ENCODE measurements at regions of chr3 and their contacts with region 1.

Region 1: GRCh38 chr3:169966428-169966950 is at the start of gene SEC62:
- DNase-seq: peak; percentile 95 to 96 (median 95)
- H3K4me3 ChIP-seq: peak within 1 kb of the TSS; percentile 83 to 97
- H3K4me3 Mint-ChIP-seq: peak within 1 kb of the TSS; percentile 90 to 100 (median 96)
- H3K27ac ChIP-seq: peak within 1 kb of the TSS; percentile 95
- H3K27ac Mint-ChIP-seq: peak within 1 kb of the TSS; percentile 98 to 100 (median 99)
- H3K4me1 ChIP-seq: peaks cover 54% of the 10 kb centered on the region
- H3K4me1 Mint-ChIP-seq: peaks cover 48 to 71% (median 60%) of the 10 kb centered on the region in 4 donors
- H3K27me3 ChIP-seq: no peaks in the 10 kb centered on the region
- H3K27me3 Mint-ChIP-seq: no peaks in the 10 kb centered on the region
- total RNA-seq, gene SEC62: 127 to 136 TPM

Region 2: GRCh38 chr3:169764452-169765274 is 201.8 kb before region 1 on chr3 and contains the start of gene TERC:
- CTCF ChIA-PET with region 1: interaction called, 3 read pairs
- POLR2A ChIA-PET with region 1: interaction called, 38 read pairs
- intact Hi-C with region 1: loop called (anchors 1 kb)
- DNase-seq: peak; percentile 93 to 96 (median 95)
- H3K4me3 ChIP-seq: peak within 1 kb of the TSS; percentile 36 to 70
- H3K4me3 Mint-ChIP-seq: peak within 1 kb of the TSS; percentile 94 to 98 (median 98)
- H3K27ac ChIP-seq: peak within 1 kb of the TSS; percentile 87
- H3K27ac Mint-ChIP-seq: peak within 1 kb of the TSS; percentile 95 to 99 (median 98)
- H3K4me1 ChIP-seq: peaks cover 23% of the 10 kb centered on the region
- H3K4me1 Mint-ChIP-seq: peaks cover 15 to 43% (median 23%) of the 10 kb centered on the region in 4 donors
- H3K27me3 ChIP-seq: no peaks in the 10 kb centered on the region
- H3K27me3 Mint-ChIP-seq: no peaks in the 10 kb centered on the region
- total RNA-seq, gene TERC: 15.6 to 15.7 TPM

Region 3: DNA sequence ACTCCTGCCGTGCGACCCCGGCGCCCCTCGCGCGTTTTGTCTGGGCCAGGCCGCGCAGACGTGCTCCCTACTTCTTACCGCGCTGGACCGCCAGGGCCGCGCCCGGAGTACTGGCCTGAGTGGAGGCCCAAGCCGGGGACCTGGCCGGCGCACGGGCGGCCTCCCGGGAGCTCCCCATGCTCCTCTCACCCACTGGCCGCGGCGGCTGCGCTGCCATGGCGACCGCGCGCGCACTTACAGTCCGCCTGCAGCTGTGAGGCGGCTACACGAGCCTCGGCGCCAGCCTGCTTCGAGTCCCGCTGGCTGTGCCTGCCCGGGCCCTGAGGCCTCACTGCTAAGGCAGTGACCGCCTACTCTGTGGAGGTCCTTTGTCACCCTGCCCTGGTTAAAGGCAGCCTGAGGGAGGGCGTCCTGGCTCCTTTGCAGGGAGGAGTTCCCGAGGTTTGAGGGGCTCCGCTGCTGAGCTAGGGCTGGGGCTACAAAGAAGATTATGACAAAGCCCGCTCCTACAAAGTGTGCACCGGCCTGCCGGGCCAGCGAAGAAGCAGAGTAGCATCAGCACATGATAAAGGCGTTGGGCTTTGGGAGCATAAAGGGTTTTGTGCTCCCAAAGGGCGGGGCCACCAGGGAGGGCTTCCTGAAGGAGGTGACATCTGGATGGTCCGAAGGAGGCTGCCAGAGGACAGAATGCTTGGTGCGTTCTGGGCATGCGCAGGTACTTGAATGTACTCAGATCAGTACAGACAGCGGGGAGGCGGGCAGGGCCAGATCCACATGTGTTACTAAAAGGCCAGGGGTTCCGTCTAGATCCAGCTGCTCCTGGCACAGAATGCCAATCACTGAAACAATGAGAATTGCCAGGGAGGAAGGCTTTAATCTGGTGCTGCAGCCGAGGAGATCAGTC is 153.9 kb before region 1 on chr3 and contains the starts of genes LRRC34 and LRRIQ4:
- CTCF ChIA-PET with region 1: interaction called, 3 read pairs
- POLR2A ChIA-PET with region 1: interaction called, 6 read pairs
- intact Hi-C with region 1: loop called (anchors 1 kb)
- DNase-seq: peak; percentile 45 to 68 (median 55)
- H3K4me3 ChIP-seq: peak within 1 kb of the TSS; percentile 65 to 80
- H3K4me3 Mint-ChIP-seq: peak within 1 kb of the TSS; percentile 79 to 98 (median 86)
- H3K27ac ChIP-seq: peak within 1 kb of the TSS; percentile 40
- H3K27ac Mint-ChIP-seq: peak within 1 kb of the TSS; percentile 55 to 87 (median 65)
- H3K4me1 ChIP-seq: peaks cover 21% of the 10 kb centered on the region
- H3K4me1 Mint-ChIP-seq: peaks cover 17 to 29% (median 19%) of the 10 kb centered on the region in 4 donors
- H3K27me3 ChIP-seq: no peaks in the 10 kb centered on the region
- H3K27me3 Mint-ChIP-seq: peaks cover 0 to under 1% of the 10 kb centered on the region in 2 donors
- total RNA-seq, gene LRRC34: 0.33 to 0.47 TPM
- total RNA-seq, gene LRRIQ4: not detected

Region 4: DNA sequence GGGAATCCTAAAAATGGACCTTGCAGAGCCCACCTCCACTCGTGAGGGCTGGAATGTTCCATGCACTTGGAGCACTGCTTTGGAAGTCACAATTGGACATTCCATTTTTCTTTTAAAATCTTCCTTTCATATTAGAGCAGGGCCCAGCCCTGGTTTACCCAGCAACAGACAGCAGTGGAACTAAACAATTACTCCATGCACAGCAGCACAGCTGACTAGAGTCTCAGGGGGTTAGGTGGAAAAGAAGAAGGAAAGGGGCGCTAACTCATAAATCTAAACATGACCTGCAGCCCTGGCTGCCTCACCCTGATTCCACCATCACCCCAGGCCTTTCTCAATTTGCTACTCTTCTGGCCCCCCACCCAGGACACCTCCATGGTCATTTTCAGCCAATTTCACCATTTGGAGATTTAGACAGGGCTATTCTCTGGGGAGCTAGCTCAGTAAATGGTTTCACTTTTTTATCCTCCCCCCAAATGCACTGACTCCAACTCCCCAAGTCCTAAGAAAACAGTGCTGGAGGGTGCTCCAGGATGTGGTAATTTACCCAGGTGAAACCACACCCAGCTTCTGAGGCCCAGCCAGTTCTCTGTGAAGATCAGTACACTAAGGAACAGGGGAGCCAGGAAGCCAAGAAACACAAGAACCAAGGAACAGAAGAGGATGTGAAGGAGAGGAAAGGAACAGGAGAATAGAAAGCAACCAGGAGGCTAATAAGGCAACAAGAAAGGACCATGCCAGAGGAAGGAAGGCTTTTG is 95.2 kb before region 1 on chr3:
- CTCF ChIA-PET with region 1: interaction called, 3 read pairs
- POLR2A ChIA-PET with region 1: interaction called, 12 read pairs
- intact Hi-C with region 1: no loop called
- DNase-seq: peak in 4 of 5 donors; percentile 22 to 29 (median 24)
- H3K4me3 ChIP-seq: no peak overlapping the region
- H3K4me3 Mint-ChIP-seq: peak overlapping the region in 7 of 8 donors; percentile 4 to 77 (median 49)
- H3K27ac ChIP-seq: no peak overlapping the region
- H3K27ac Mint-ChIP-seq: peak overlapping the region in 5 of 7 donors; percentile 3 to 83 (median 58)
- H3K4me1 ChIP-seq: peaks cover 15% of the 10 kb centered on the region
- H3K4me1 Mint-ChIP-seq: peaks cover 12 to 27% (median 15%) of the 10 kb centered on the region in 4 donors
- H3K27me3 ChIP-seq: peaks cover 5% of the 10 kb centered on the region
- H3K27me3 Mint-ChIP-seq: peaks cover 1 to 2% of the 10 kb centered on the region in 2 donors

Region 5: GRCh38 chr3:170037463-170038433 is 71.3 kb after region 1 on chr3 and contains the start of gene GPR160:
- CTCF ChIA-PET with region 1: interaction called, 4 read pairs
- POLR2A ChIA-PET with region 1: interaction called, 14 read pairs
- intact Hi-C with region 1: loop called (anchors 1 kb)
- DNase-seq: peak; percentile 75 to 82 (median 79)
- H3K4me3 ChIP-seq: peak within 1 kb of the TSS; percentile 39 to 77
- H3K4me3 Mint-ChIP-seq: peak within 1 kb of the TSS; percentile 84 to 92 (median 88)
- H3K27ac ChIP-seq: peak within 1 kb of the TSS; percentile 41
- H3K27ac Mint-ChIP-seq: peak within 1 kb of the TSS; percentile 25 to 90 (median 79)
- H3K4me1 ChIP-seq: peaks cover 21% of the 10 kb centered on the region
- H3K4me1 Mint-ChIP-seq: peaks cover 16 to 38% (median 29%) of the 10 kb centered on the region in 4 donors
- H3K27me3 ChIP-seq: no peaks in the 10 kb centered on the region
- H3K27me3 Mint-ChIP-seq: no peaks in the 10 kb centered on the region
- total RNA-seq, gene GPR160: 13.1 to 14.9 TPM

Region 6: DNA sequence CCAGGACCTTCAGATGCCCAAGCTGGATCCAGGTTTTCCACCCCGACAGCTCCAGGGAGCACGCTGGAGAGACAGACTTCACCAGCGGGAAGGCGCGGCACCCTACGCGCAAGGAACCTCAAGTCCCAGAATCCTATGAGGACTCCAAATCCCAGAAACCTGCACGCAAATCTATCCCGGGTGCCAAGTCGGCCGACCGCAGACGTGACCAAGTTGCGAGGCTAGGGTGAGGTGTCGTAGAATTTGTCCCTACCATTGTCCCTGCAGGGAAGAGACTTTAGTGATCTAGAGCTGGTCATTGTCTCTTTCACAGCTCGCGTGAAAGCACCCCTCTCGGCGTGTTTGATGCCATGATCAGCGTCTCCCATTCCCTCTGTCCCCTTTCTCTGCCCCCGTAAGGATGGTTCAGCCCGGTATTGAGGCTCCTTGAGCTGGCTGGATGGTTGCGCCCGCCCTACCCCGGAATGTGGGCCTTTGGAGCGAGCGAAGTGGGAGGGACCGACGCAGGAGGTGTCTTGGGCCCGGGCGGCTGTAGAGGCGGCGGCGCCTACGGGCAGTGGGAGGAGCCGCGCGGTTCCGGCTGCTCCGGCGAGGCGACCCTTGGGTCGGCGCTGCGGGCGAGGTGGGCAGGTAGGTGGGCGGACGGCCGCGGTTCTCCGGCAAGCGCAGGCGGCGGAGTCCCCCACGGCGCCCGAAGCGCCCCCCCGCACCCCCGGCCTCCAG is 255.6 kb after region 1 on chr3 and contains the start of gene PRKCI:
- CTCF ChIA-PET with region 1: no interaction called
- POLR2A ChIA-PET with region 1: interaction called, 3 read pairs
- intact Hi-C with region 1: loop called (anchors 5 kb)
- DNase-seq: peak; percentile 86 to 89 (median 88)
- H3K4me3 ChIP-seq: peak within 1 kb of the TSS; percentile 91 to 97
- H3K4me3 Mint-ChIP-seq: peak within 1 kb of the TSS; percentile 91 to 99 (median 94)
- H3K27ac ChIP-seq: peak within 1 kb of the TSS; percentile 72
- H3K27ac Mint-ChIP-seq: peak within 1 kb of the TSS; percentile 92 to 99 (median 95)
- H3K4me1 ChIP-seq: peaks cover 25% of the 10 kb centered on the region
- H3K4me1 Mint-ChIP-seq: peaks cover 24 to 39% (median 29%) of the 10 kb centered on the region in 4 donors
- H3K27me3 ChIP-seq: no peaks in the 10 kb centered on the region
- H3K27me3 Mint-ChIP-seq: no peaks in the 10 kb centered on the region
- total RNA-seq, gene PRKCI: 18.0 to 27.7 TPM

Region 7: GRCh38 chr3:170869645-170870593 is 903.4 kb after region 1 on chr3 and contains the start of gene RPL22L1:
- CTCF ChIA-PET with region 1: interaction called, 3 read pairs
- POLR2A ChIA-PET with region 1: interaction called, 9 read pairs
- intact Hi-C with region 1: loop called (anchors 10 kb)
- DNase-seq: peak; percentile 92 to 94 (median 94)
- H3K4me3 ChIP-seq: peak within 1 kb of the TSS; percentile 76 to 92
- H3K4me3 Mint-ChIP-seq: peak within 1 kb of the TSS; percentile 91 to 98 (median 96)
- H3K27ac ChIP-seq: peak within 1 kb of the TSS; percentile 82
- H3K27ac Mint-ChIP-seq: peak within 1 kb of the TSS; percentile 92 to 99 (median 98)
- H3K4me1 ChIP-seq: peaks cover 34% of the 10 kb centered on the region
- H3K4me1 Mint-ChIP-seq: peaks cover 12 to 36% (median 24%) of the 10 kb centered on the region in 4 donors
- H3K27me3 ChIP-seq: no peaks in the 10 kb centered on the region
- H3K27me3 Mint-ChIP-seq: no peaks in the 10 kb centered on the region
- total RNA-seq, gene RPL22L1: 31.9 to 32.3 TPM

Measured in CD4-positive, alpha-beta memory T cell (primary cell).